Activated T-helper 1 cell treated with anti-CD3 and anti-CD28 coated beads, Interleukin-12 subunit alpha, Interleukin-12 subunit beta, Interleukin-2, Interleukin-4 antibody, amounts not matched to agents 30 ng/mL and 10 ng/mL and 1 ng/mL, durations not matched to agents 14 hours and 24 hours and 36 hours (primary cell): ENCODE measurements at regions of chr7 and their contacts with region 1.

Region 1: DNA sequence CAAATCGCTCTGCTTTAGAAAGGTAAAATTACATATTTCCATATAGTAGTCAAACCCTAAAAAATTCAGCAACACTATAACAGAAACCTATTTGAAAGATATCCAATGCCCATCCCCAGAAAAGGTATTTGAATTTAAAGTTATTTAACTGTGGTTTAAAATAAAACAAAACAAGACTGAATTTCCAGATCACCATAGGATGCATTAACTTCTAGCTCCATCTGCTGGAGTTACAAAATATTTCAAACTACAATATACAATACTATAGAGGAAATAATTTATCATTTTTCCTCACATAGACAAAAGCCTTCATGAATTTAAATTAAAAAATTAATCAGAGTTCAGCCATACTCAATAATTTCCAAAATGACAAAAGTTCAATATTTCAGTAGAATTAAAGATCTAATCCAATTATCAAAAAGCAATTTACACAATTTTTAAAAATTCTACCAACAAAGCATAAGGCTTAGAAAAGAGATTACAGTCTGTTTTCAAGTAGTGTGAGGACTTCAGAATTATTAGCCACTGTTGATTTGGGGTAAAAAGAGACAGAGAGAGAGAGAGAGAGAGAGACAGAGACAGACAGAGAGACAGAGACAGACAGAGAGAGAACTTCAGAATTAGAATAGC is 75.9 kb downstream of the LMBR1 start:
- DNase-seq: no peak
- H3K4me3 Mint-ChIP-seq: no peak overlapping the region
- H3K27ac Mint-ChIP-seq: no peak overlapping the region
- H3K4me1 Mint-ChIP-seq: no peaks in the 10 kb centered on the region
- H3K27me3 Mint-ChIP-seq: no peaks in the 10 kb centered on the region

Region 2: DNA sequence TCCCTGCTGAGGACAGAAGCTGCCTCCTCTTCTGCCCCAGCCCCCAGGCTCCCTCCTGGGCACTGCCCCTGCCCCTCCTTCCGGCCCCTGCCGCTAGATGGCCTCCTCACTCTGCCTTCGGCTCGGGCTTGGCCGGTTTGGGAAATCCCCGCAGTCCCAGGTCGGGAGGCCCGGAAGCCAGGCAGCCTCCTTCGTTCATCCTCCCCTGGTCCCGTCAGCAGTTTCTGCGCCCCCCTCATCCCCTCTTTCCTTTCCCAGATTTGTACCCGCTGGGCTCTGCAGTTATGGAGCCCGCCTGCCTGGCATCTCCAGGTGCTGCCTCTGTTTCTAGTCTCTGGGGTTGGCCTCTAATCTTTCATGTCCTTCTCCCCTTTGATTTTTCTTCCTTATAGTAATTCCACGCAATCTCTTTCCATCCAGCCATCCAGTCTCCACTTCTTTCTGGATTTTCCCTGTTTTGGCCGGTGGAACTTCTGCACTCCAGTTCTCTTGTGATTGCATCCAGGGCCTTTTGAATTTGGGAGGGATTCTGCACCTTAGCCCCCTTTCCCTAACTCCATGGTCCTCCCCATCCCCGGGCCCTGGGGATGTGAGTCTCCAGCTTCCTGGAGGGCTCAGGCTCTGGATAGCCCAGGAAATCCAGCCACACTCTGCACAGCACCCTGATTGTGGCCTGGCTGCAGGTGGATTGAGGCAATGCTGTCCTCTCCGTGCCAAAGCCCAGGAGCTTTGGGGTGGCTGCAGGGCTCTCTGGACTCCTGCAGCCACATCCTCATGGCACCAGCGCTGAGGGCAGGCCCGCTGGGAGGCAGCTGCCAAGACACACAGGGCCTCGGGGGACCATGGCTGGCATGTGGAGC is 1001.5 kb before region 1 on chr7:
- intact Hi-C with region 1: loop called (anchors 1 kb)
- DNase-seq: peak; percentile 66
- H3K4me3 Mint-ChIP-seq: no peak overlapping the region
- H3K27ac Mint-ChIP-seq: peak overlapping the region; percentile 67
- H3K4me1 Mint-ChIP-seq: peaks cover 21% of the 10 kb centered on the region
- H3K27me3 Mint-ChIP-seq: peaks cover 47% of the 10 kb centered on the region

Region 3: GRCh38 chr7:156473476-156474240 is 343.4 kb before region 1 on chr7:
- intact Hi-C with region 1: loop called (anchors 10 kb)
- DNase-seq: no peak
- H3K4me3 Mint-ChIP-seq: no peak overlapping the region
- H3K27ac Mint-ChIP-seq: no peak overlapping the region
- H3K4me1 Mint-ChIP-seq: no peaks in the 10 kb centered on the region
- H3K27me3 Mint-ChIP-seq: peaks cover 20% of the 10 kb centered on the region

Region 4: DNA sequence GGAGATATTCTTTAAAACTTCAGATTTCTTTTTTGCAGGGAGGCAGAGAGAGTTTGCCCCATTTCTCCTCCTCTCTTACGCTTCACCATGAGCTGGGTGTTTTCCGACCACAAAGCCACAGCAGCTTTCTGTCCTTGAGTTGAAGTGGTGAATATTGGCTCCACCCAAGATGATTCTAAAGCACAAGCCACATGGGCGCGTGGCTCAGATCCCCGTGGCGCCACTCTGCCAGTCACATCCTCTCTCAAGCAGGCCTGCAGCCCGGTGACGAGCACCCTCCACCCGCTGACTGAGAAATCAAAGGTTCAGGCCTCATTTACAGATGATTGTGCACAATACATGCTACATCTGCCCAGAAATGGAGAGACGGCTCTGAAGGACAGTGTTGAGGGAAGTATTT is 204.1 kb before region 1 on chr7:
- intact Hi-C with region 1: loop called (anchors 1 kb)
- DNase-seq: peak; percentile 82
- H3K4me3 Mint-ChIP-seq: peak overlapping the region; percentile 63
- H3K27ac Mint-ChIP-seq: peak overlapping the region; percentile 25
- H3K4me1 Mint-ChIP-seq: peaks cover 37% of the 10 kb centered on the region
- H3K27me3 Mint-ChIP-seq: peaks cover 56% of the 10 kb centered on the region

Region 5: DNA sequence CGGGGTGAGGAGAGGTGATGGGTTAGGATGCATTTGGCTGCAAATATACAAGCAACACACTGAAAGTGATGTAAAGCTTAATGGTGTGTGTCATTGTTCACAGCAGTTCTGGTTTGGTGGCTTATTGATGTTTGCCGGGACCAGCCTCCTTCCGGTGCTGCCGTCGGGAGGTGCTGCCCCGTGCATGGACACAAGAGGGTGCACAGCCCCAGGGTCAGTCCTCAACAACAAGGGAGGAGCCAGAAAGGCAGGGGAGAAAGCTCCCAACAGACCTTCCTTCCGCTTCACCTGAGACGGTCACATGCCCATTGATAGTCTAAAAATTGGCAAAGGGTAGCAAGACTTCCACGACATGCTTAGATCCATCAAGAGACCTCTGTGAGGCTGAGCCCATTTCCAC is 167.0 kb before region 1 on chr7:
- intact Hi-C with region 1: loop called (anchors 1 kb)
- DNase-seq: no peak
- H3K4me3 Mint-ChIP-seq: no peak overlapping the region
- H3K27ac Mint-ChIP-seq: no peak overlapping the region
- H3K4me1 Mint-ChIP-seq: peaks cover 3% of the 10 kb centered on the region
- H3K27me3 Mint-ChIP-seq: peaks cover 30% of the 10 kb centered on the region

Region 6: GRCh38 chr7:156773966-156774365 is 43.1 kb before region 1 on chr7:
- intact Hi-C with region 1: loop called (anchors 2 kb)
- DNase-seq: no peak
- H3K4me3 Mint-ChIP-seq: no peak overlapping the region
- H3K27ac Mint-ChIP-seq: no peak overlapping the region
- H3K4me1 Mint-ChIP-seq: peaks cover 53% of the 10 kb centered on the region
- H3K27me3 Mint-ChIP-seq: no peaks in the 10 kb centered on the region

Region 7: GRCh38 chr7:156827587-156828203 is 10.6 kb after region 1 on chr7:
- intact Hi-C with region 1: no loop called
- DNase-seq: no peak
- H3K4me3 Mint-ChIP-seq: no peak overlapping the region
- H3K27ac Mint-ChIP-seq: no peak overlapping the region
- H3K4me1 Mint-ChIP-seq: no peaks in the 10 kb centered on the region
- H3K27me3 Mint-ChIP-seq: no peaks in the 10 kb centered on the region

Region 8: DNA sequence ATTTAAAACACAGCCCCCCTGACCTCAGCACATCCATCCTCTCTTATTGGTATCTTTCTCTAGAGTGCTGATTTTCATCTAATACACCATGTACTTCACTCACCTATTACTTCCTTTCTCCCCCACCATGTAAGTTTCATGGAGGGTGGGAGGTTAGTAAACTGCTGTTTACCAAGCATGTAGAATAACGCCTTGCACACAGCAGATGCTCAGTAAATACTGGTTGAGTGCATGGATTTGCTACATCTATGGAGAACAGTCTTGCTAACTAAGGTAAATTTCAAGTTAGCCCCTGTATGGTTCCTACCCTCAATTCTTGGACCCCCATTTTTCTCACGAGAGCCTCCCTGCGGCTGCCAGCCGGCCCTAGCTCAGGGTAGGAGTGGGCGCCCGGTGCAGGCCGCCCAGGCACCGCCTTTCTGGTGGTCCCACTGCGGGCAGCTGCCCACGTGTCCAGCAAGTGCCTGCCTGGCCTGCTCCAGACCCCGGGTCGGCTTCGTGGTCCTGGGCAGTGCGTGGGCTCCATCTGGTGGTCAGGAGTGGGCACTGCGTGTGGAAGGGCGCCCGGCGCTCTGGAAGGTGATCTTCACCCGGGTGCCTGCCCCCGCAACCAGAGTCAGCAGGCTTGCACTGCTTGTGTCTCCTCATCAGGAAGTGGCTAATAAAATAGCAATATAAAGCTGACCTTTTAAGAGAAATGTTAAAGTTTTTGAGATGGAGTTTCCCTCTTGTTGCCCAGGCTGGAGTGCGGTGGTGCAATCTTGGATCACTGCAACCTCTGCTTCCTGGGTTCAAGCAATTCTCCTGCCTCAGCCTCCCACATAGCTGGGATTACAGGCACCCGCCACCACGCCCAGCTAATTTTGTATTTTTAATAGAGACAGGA is 456.4 kb after region 1 on chr7:
- intact Hi-C with region 1: no loop called
- DNase-seq: peak; percentile 36
- H3K4me3 Mint-ChIP-seq: no peak overlapping the region
- H3K27ac Mint-ChIP-seq: no peak overlapping the region
- H3K4me1 Mint-ChIP-seq: peaks cover 18% of the 10 kb centered on the region
- H3K27me3 Mint-ChIP-seq: peaks cover 2% of the 10 kb centered on the region